Cardiac septum (tissue), 1 donor: ENCODE measurements at regions of chr17 and their contacts with region 1.

Region 1: GRCh38 chr17:18260332-18261144 is at the start of gene MIEF2:
- DNase-seq: peak; percentile 98
- total RNA-seq, gene MIEF2: 28.0 TPM

Region 2: DNA sequence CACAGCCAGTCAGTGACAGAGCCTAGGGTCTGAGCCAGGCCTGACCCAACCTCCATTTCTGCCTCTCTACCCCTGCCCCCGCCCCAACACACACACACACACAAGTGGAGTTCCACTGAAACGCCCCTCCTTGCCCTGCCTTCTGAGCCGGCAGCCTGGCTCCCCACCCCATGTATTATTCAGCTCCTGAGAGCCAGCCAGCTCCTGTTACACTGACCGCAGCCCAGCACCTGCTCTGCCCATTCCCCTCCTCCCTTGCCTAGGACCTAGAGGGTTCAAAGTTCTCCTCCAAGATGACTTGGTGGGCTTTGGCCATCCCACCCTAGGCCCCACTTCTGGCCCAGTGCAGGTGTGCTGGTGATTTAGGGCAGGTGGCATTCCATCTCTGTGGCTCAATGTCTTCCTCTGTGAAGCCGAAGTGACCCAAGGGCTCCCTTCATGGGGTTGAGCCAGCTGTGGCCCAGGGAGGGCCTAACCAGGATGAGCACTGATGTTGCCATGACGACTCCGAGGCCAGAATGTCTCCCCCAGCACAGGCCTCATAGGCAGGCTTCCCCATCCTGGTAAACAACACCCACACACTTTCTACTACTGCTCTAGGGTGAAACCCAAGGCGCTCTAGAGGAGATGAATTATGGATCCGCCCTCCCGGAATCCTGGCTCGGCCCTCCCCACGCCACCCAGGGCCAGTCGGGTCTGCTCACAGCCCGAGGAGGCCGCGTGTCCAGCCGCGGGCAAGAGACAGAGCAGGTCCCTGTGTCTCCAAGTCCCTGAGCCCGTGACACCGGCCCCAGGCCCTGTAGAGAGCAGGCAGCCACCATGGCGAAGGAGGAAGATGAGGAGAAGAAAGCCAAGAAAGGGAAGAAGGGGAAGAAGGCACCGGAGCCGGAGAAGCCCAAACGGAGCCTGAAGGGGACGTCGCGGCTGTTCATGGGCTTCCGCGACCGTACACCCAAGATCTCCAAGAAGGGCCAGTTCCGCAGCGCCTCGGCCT is 142.3 kb before region 1 on chr17:
- intact Hi-C with region 1: no loop called
- DNase-seq: no peak

Region 3: DNA sequence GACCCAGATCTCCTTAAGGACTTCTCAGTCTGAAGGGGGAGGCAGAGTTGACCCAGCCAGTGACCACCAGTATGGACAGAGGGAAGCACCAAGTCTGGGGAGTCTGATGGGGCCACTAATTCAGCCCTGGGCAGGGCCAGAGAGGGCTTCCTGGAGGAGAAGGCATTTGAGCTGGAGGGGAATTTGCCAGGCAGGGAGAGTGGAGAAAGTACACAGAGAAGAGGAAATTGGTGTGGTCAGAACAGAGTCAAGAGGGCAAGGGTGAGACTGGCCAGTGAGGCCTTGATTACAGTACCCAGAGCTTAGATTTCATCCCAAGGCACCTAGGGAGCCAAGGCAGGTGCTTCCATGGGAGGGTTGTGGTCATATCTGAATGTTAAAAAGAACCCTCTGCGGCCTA is 115.7 kb before region 1 on chr17:
- intact Hi-C with region 1: no loop called
- DNase-seq: no peak

Region 4: DNA sequence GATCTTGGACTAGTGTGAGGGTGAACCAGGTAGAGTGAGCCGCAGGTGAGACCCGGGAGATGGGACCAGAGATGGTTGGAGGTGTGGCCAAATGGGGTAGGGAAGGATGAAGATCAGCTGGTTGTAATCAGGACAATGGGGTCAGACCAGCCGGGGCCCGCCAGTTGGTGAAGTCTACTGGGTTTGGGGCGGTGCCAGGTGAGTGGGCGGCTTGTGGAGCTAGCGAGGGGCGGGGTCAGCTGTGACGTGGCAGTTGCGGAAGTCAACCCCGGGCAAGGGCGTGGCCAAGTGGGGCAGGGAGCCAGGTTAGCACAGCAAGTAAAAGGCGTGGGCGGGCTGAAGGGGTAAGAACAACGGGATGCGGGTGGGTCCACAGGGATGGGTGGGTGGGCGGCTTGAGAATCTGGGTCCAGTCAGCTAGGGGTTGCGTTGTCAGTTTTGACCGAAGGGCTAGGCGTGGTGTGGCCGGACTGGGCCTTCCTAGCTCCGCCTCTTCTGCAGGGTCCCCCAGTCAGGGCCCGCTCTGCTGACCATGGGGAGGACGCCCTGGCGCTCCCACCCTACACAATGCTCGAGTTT is 102.4 kb before region 1 on chr17:
- intact Hi-C with region 1: no loop called
- DNase-seq: peak; percentile 98

Region 5: DNA sequence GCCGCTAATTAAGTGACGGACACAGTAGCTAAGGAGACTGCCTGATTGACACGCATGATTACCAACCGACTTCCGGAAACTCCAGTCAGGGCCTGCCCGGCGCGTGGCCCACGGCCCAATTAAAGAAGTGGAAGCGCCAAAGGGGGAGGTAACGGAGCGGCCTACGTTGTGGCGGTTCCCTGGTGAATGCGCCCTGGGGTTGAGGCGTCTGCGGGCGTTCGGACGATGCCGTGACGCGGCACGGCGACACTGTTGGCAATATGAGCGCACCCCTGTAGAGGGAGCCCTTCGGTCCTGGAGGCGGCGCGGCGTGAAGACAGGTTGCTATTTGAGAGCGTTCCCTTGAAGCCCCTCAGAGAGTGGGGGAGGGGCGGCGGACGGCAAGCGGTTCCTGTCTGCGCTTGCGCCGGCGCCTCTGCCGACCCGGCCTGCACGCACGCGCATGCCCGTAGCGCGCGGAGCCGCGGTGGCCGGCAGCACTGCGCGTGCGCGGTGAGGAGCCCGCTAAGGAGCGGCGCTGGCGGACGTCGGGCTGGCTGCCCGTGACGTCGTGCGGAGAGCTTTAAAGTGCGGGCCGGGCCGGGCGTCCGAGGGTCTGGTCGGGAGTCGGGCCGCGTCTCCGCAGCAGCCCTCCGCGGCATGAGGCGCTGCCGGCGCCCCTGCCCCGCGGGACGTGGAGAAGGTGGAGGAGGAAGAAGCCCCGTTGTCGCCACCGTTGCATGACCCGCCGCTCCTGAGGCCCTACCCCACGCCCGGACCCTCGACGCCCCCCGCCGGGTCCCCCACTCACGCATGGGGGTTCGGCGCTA is 77.0 kb before region 1 on chr17 and contains the start of gene ALKBH5:
- intact Hi-C with region 1: loop called (anchors 2 kb)
- DNase-seq: peak; percentile 99
- total RNA-seq, gene ALKBH5: 168 TPM

Region 6: GRCh38 chr17:18225121-18225566 is 35.4 kb before region 1 on chr17:
- intact Hi-C with region 1: loop called (anchors 2 kb)
- DNase-seq: peak; percentile 98